Activated CD4-positive, alpha-beta memory T cell treated with anti-CD3 and anti-CD28 coated beads for 36 hours (primary cell): ENCODE measurements at regions of chr12 and their contacts with region 1.

Region 1: GRCh38 chr12:98644711-98645402 is at the starts of genes APAF1 and IKBIP:
- DNase-seq: peak; percentile 98
- H3K4me3 Mint-ChIP-seq: peak within 1 kb of the TSS; percentile 96
- H3K27ac Mint-ChIP-seq: peak within 1 kb of the TSS; percentile 95
- H3K4me1 Mint-ChIP-seq: peaks cover 28% of the 10 kb centered on the region
- H3K27me3 Mint-ChIP-seq: no peaks in the 10 kb centered on the region
- total RNA-seq, gene APAF1: 19.6 to 20.8 TPM
- total RNA-seq, gene IKBIP: 24.9 to 26.2 TPM

Region 2: GRCh38 chr12:98503592-98504367 is 141.1 kb before region 1 on chr12:
- CTCF ChIA-PET with region 1: no interaction called
- POLR2A ChIA-PET with region 1: no interaction called
- intact Hi-C with region 1: loop called (anchors 1 kb)
- DNase-seq: peak; percentile 97
- H3K4me3 Mint-ChIP-seq: peak overlapping the region; percentile 86
- H3K27ac Mint-ChIP-seq: peak overlapping the region; percentile 99
- H3K4me1 Mint-ChIP-seq: peaks cover 39% of the 10 kb centered on the region
- H3K27me3 Mint-ChIP-seq: peaks cover 9% of the 10 kb centered on the region